ENCODE measurements at regions of chr10 and their contacts with region 1.

Region 1: DNA sequence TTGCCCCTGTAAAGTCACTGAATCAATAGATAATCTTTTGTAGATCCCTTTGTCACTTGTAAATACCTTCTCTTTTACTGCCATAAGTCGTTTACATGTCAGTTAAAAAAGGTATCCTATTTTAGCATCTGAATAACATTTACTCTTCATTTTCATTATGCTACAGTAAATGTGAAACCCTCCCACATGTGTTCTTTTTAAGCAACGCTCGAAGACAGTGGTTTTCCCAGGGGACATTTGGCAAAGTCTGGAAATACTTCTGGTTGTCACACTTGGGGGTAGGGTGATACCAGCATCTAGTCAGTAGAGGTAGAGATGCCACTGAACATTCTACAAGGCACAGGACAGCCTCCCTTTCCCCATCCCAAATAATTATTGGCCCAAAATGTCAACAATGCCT is 23.7 kb downstream of the ATAD1 start:
- DNase-seq: no peak
- ATAC-seq: no peak
- H3K4me3 ChIP-seq: no peak overlapping the region
- H3K4me3 Mint-ChIP-seq: no peak overlapping the region
- H3K27ac ChIP-seq: no peak overlapping the region
- H3K27ac Mint-ChIP-seq: peak overlapping the region in 1 of 2 donors; percentile 78
- H3K4me1 ChIP-seq: peaks cover 2 to 5% of the 10 kb centered on the region in 2 experiments
- H3K4me1 Mint-ChIP-seq: peaks cover 40 to 57% (median 51%) of the 10 kb centered on the region in 3 donors
- H3K27me3 ChIP-seq: no peaks in the 10 kb centered on the region
- H3K27me3 Mint-ChIP-seq: no peaks in the 10 kb centered on the region

Region 2: GRCh38 chr10:88386821-88387773 is 592.8 kb after region 1 on chr10:
- CTCF ChIA-PET with region 1: interaction called in 1 of 2 experiments, 12 read pairs
- POLR2A ChIA-PET with region 1: no interaction called
- DNase-seq: peak in 9 of 35 experiments; percentile 2 to 53 (median 10)
- ATAC-seq: peak in 3 of 4 experiments; percentile 18 to 51 (median 44)
- H3K4me3 ChIP-seq: peak overlapping the region in 1 of 2 donors; percentile 15
- H3K4me3 Mint-ChIP-seq: no peak overlapping the region
- H3K27ac ChIP-seq: peak overlapping the region; percentile 96
- H3K27ac Mint-ChIP-seq: no peak overlapping the region
- H3K4me1 ChIP-seq: peaks cover 34 to 73% of the 10 kb centered on the region in 2 experiments
- H3K4me1 Mint-ChIP-seq: peaks cover 16 to 30% (median 30%) of the 10 kb centered on the region in 3 donors
- H3K27me3 ChIP-seq: no peaks in the 10 kb centered on the region
- H3K27me3 Mint-ChIP-seq: no peaks in the 10 kb centered on the region

Measured in T-cell (primary cell).